Aorta (tissue), 5 donors: ENCODE measurements at regions of chr17 and their contacts with region 1.

Region 1: DNA sequence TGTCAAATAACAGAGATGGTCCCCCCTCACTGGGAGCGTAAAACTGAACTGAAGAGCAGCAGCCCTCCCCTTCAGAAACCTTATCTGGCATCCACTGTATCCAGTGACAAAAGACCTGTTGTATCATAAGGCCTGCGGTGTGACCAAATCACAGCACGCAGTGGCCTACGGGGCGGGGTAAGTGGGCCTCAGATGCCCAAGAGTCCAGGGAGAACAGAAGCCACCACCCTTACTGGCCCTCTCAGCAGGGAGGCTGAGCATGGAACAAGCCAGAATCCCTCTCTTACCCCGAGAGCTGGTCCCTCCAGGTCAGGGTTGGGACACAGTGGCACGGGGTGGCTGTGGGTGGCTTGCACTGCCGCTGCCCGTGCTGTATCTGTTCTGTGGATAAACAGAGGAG is 5.4 kb downstream of the JMJD6 start:
- DNase-seq: no peak
- ATAC-seq: no peak
- H3K4me3 ChIP-seq: no peak overlapping the region
- H3K27ac ChIP-seq: no peak overlapping the region
- H3K4me1 ChIP-seq: peaks cover 0 to 3% of the 10 kb centered on the region in 2 donors
- H3K27me3 ChIP-seq: no peaks in the 10 kb centered on the region

Region 2: GRCh38 chr17:76388966-76389888 is 331.7 kb before region 1 on chr17:
- intact Hi-C with region 1: no loop called
- DNase-seq: no peak
- ATAC-seq: no peak
- H3K4me3 ChIP-seq: no peak overlapping the region
- H3K27ac ChIP-seq: no peak overlapping the region
- H3K4me1 ChIP-seq: no peaks in the 10 kb centered on the region
- H3K27me3 ChIP-seq: no peaks in the 10 kb centered on the region

Region 3: GRCh38 chr17:76557368-76558197 is 163.4 kb before region 1 on chr17:
- intact Hi-C with region 1: loop called (anchors 2 to 10 kb)
- DNase-seq: peak; percentile 97
- ATAC-seq: peak; percentile 98
- H3K4me3 ChIP-seq: peak overlapping the region; percentile 69 to 91
- H3K27ac ChIP-seq: peak overlapping the region in 1 of 2 donors; percentile 84
- H3K4me1 ChIP-seq: no peaks in the 10 kb centered on the region
- H3K27me3 ChIP-seq: no peaks in the 10 kb centered on the region